Right lobe of liver (tissue), 6 donors: ENCODE measurements at regions of chr2 and their contacts with region 1.

Region 1: GRCh38 chr2:75466708-75467311 is 93.9 kb downstream of the EVA1A start:
- DNase-seq: peak in 1 of 3 donors; percentile 45
- ATAC-seq: peak in 3 of 4 donors; percentile 37 to 66 (median 64)
- H3K4me3 ChIP-seq: no peak overlapping the region
- H3K27ac ChIP-seq: no peak overlapping the region
- H3K4me1 ChIP-seq: no peaks in the 10 kb centered on the region
- H3K27me3 ChIP-seq: no peaks in the 10 kb centered on the region
- CTCF ChIP-seq: peak; percentile 15 to 47 (median 30)
- POLR2A ChIP-seq: no peak

Region 2: DNA sequence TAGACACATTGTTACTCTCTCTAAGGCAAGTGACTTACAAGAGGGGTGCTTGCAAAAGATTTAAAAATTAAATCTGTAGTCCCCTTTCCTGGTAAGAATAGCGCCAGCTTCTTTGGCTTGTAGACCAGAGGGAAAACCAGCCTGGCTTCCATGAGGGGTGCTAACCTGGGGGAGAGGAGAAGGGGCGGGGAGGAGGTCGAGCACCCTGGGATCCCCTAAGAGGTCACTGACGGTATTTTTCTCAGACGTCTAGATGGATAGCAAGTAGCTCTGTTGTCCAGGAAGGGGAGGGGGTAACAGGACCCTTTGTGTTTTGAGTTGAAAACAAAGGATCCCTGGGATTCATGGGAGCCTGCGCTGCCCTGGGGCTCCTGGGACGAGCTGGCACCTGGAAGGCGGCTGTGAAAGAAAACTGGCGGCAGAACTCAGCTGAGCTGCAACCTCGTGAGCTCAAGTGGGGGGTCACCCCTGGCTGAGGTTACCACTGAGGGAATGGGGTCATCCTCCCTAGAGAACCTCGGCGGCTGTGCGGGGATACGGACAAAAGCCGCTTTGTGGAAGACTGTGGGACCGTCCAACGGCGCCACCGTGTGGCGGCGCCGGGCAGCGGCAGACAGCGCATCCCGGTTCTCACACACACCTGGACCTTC is 142.0 kb after region 1 on chr2:
- intact Hi-C with region 1: loop called (anchors 5 kb)
- DNase-seq: peak; percentile 66 to 68 (median 68)
- ATAC-seq: peak; percentile 94 to 99 (median 97)
- H3K4me3 ChIP-seq: peak overlapping the region in 1 of 3 donors; percentile 28
- H3K27ac ChIP-seq: no peak overlapping the region
- H3K4me1 ChIP-seq: no peaks in the 10 kb centered on the region
- H3K27me3 ChIP-seq: no peaks in the 10 kb centered on the region
- CTCF ChIP-seq: peak; percentile 90 to 98 (median 96)
- POLR2A ChIP-seq: no peak